Caco-2 (cell line): ENCODE measurements at regions of chr5 and their contacts with region 1.

Region 1: DNA sequence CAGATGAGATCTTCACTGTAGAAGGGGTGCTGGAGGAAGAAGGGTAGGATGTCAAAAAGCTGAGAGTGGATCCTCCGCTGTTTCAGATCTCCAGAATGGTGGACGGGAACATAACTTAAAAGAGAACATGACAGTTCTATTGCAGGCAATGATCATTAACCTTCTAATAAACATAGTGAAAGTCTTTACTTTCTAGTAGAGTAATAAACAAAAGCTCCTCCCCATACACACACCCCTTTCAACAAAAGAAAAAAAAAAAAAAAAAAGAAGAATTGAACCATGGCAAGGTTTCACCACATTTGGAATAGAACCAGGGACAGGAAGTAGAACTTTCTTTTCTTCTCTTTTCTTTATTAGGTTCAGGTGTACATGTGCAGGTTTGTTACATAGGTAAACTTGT is 768.1 kb upstream of the RIOK2 start:
- DNase-seq: no peak
- H3K4me3 ChIP-seq: no peak overlapping the region
- H3K4me3 Mint-ChIP-seq: no peak overlapping the region
- H3K27ac Mint-ChIP-seq: no peak overlapping the region
- H3K4me1 ChIP-seq: no peaks in the 10 kb centered on the region
- H3K4me1 Mint-ChIP-seq: no peaks in the 10 kb centered on the region
- H3K27me3 ChIP-seq: no peaks in the 10 kb centered on the region
- H3K27me3 Mint-ChIP-seq: no peaks in the 10 kb centered on the region
- CTCF ChIP-seq: no peak

Region 2: DNA sequence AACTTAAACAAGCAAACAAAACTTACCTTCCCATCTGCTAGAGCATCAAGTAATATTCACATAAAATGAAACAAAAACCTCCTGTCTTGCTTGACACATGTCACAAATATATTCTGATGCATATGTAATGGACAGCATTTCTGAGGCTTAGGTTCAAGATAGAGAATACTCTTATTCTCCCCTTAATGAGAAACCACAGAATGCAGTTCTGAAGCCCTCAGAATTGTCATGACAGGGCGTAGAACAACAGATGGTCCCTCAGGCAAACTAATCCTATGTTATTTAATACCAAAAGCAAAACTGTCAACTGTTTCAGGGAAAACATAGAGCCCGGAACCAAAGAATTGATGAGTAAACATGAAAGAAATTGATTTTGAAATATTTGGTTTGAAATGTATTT is 538.2 kb before region 1 on chr5:
- CTCF ChIA-PET with region 1: no interaction called
- POLR2A ChIA-PET with region 1: no interaction called
- intact Hi-C with region 1: no loop called
- DNase-seq: no peak
- H3K4me3 ChIP-seq: no peak overlapping the region
- H3K4me3 Mint-ChIP-seq: no peak overlapping the region
- H3K27ac Mint-ChIP-seq: no peak overlapping the region
- H3K4me1 ChIP-seq: no peaks in the 10 kb centered on the region
- H3K4me1 Mint-ChIP-seq: no peaks in the 10 kb centered on the region
- H3K27me3 ChIP-seq: no peaks in the 10 kb centered on the region
- H3K27me3 Mint-ChIP-seq: peaks cover 6% of the 10 kb centered on the region
- CTCF ChIP-seq: no peak

Region 3: DNA sequence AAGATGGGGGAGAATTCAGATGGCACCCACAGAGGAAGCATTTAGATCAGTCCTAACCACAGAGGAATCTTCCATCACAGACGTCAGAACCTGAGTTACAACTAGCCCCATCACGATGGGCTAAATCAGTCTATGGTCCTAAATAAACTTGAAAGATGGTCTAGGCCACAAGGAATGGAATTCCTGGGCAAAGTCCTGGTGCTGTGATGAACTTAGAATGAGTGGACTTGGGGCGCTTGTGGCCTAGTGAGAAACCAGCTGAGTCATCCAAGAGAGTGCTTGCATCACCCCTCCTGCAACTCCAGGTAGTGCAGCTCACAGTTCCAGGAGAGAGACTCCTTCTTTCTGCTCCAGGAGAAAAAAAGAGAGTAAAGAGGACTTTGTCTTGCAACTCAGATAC is 99.4 kb after region 1 on chr5:
- CTCF ChIA-PET with region 1: no interaction called
- POLR2A ChIA-PET with region 1: no interaction called
- intact Hi-C with region 1: loop called (anchors 5 kb)
- DNase-seq: peak in 1 of 2 experiments; percentile 13
- H3K4me3 ChIP-seq: no peak overlapping the region
- H3K4me3 Mint-ChIP-seq: no peak overlapping the region
- H3K27ac Mint-ChIP-seq: no peak overlapping the region
- H3K4me1 ChIP-seq: peaks cover 29% of the 10 kb centered on the region
- H3K4me1 Mint-ChIP-seq: peaks cover 8% of the 10 kb centered on the region
- H3K27me3 ChIP-seq: no peaks in the 10 kb centered on the region
- H3K27me3 Mint-ChIP-seq: no peaks in the 10 kb centered on the region
- CTCF ChIP-seq: no peak

Region 4: GRCh38 chr5:98750693-98751092 is 799.6 kb after region 1 on chr5:
- CTCF ChIA-PET with region 1: no interaction called
- POLR2A ChIA-PET with region 1: no interaction called
- intact Hi-C with region 1: loop called (anchors 5 kb)
- DNase-seq: peak in 1 of 2 experiments; percentile 26
- H3K4me3 ChIP-seq: no peak overlapping the region
- H3K4me3 Mint-ChIP-seq: no peak overlapping the region
- H3K27ac Mint-ChIP-seq: no peak overlapping the region
- H3K4me1 ChIP-seq: no peaks in the 10 kb centered on the region
- H3K4me1 Mint-ChIP-seq: no peaks in the 10 kb centered on the region
- H3K27me3 ChIP-seq: no peaks in the 10 kb centered on the region
- H3K27me3 Mint-ChIP-seq: peaks cover 6% of the 10 kb centered on the region
- CTCF ChIP-seq: peak; percentile 40 to 60